CD14-positive monocyte (primary cell): ENCODE measurements at regions of chr1 and their contacts with region 1.

Region 1: DNA sequence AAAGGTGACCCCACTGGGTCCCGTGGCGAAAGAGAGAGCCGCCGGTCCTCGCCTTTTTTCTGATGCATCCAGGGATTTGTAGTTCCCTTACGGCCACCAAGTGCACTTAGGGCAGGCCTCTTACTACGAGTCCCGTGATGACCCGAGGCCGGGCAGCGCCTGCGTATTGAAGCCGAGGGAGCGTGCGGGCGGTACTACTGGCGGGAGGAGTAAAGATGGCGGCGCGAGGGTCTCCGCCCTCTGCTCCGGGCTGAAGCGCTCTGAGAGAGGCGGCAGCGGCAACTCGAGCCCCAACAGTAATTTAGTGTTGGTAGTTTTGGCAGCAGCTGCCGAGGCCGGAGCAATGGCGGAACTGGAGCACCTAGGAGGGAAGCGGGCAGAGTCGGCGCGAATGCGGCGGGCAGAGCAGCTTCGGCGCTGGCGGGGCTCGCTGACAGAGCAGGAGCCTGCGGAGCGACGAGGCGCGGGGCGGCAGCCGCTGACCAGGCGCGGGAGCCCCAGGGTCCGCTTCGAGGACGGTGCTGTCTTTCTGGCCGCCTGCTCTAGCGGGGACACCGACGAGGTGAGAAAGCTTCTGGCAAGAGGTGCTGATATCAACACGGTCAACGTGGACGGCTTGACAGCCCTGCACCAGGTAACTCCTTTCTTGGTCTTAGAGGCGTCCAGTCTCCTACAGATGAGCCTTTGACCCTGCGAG is at the start of gene PPP1R12B:
- DNase-seq: peak; percentile 97 to 99 (median 97)
- H3K4me3 ChIP-seq: peak within 1 kb of the TSS; percentile 71 to 97 (median 94)
- H3K4me3 Mint-ChIP-seq: peak within 1 kb of the TSS; percentile 94 to 97
- H3K27ac ChIP-seq: peak within 1 kb of the TSS; percentile 81 to 95
- H3K27ac Mint-ChIP-seq: peak within 1 kb of the TSS; percentile 90 to 97 (median 94)
- H3K4me1 ChIP-seq: peaks cover 22 to 27% of the 10 kb centered on the region in 2 donors
- H3K4me1 Mint-ChIP-seq: peaks cover 37% of the 10 kb centered on the region
- H3K27me3 ChIP-seq: no peaks in the 10 kb centered on the region
- H3K27me3 Mint-ChIP-seq: peaks cover 0 to 3% (median 1%) of the 10 kb centered on the region in 3 donors
- CTCF ChIP-seq: no peak
- polyA plus RNA-seq, gene PPP1R12B: 1.3 to 12.2 (median 1.7) TPM

Region 2: GRCh38 chr1:202365092-202365815 is 16.6 kb after region 1 on chr1:
- intact Hi-C with region 1: no loop called
- DNase-seq: no peak
- H3K4me3 ChIP-seq: no peak overlapping the region
- H3K4me3 Mint-ChIP-seq: no peak overlapping the region
- H3K27ac ChIP-seq: no peak overlapping the region
- H3K27ac Mint-ChIP-seq: no peak overlapping the region
- H3K4me1 ChIP-seq: no peaks in the 10 kb centered on the region
- H3K4me1 Mint-ChIP-seq: peaks cover 7% of the 10 kb centered on the region
- H3K27me3 ChIP-seq: no peaks in the 10 kb centered on the region
- H3K27me3 Mint-ChIP-seq: peaks cover 0 to 2% (median 0%) of the 10 kb centered on the region in 3 donors
- CTCF ChIP-seq: no peak

Region 3: GRCh38 chr1:202888531-202889360 is 540.1 kb after region 1 on chr1 and contains the start of gene RABIF:
- intact Hi-C with region 1: loop called in 1 of 2 experiments (anchors 10 kb)
- DNase-seq: peak; percentile 94 to 98 (median 95)
- H3K4me3 ChIP-seq: peak within 1 kb of the TSS; percentile 91 to 93 (median 93)
- H3K4me3 Mint-ChIP-seq: peak within 1 kb of the TSS; percentile 96 to 97
- H3K27ac ChIP-seq: peak within 1 kb of the TSS; percentile 96 to 98
- H3K27ac Mint-ChIP-seq: peak within 1 kb of the TSS; percentile 96 to 99 (median 99)
- H3K4me1 ChIP-seq: peaks cover 14 to 30% of the 10 kb centered on the region in 2 donors
- H3K4me1 Mint-ChIP-seq: peaks cover 22% of the 10 kb centered on the region
- H3K27me3 ChIP-seq: no peaks in the 10 kb centered on the region
- H3K27me3 Mint-ChIP-seq: peaks cover 0 to 2% (median 0%) of the 10 kb centered on the region in 3 donors
- CTCF ChIP-seq: no peak
- polyA plus RNA-seq, gene RABIF: 7.8 to 24.6 (median 22.8) TPM